ENCODE measurements at regions of chr14 and their contacts with region 1.

Region 1: DNA sequence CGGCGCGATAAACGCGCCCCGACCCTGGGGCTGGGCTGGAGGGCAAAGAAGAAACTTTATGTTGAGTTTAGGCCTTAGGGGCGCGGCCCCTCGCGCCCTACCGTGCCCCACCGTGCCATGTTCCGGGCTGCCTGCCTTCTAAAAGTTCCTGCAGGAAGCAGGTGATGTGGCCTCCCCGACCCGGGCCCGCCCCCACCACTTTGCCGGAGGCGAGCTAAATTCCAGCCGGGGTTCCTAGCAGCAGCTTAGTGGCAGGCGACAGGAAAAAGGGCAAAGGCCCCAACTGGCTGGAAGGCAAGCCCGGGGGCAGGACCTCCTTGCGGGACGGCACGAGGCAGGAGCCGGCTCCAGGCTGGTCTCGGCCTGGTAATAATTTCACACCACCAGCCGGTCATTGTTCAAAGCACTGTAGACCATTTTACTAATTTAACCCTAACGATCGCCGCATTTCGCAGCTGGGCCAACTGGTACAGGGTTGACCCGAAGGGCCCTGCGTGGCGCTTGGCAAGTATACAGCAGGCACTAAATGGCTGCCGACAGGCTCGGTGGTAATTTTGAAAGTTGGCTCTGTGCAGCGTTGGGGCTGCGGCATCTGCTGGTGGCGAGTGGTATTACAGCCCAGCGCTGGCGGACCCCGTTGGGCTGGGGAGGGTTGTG is 895 bp upstream of the CCDC88C start:
- DNase-seq: peak; percentile 75 to 86 (median 82)
- ATAC-seq: peak; percentile 63
- H3K4me3 ChIP-seq: peak overlapping the region; percentile 52
- H3K4me3 Mint-ChIP-seq: peak overlapping the region; percentile 61 to 91 (median 84)
- H3K27ac ChIP-seq: peak overlapping the region; percentile 97
- H3K27ac Mint-ChIP-seq: peak overlapping the region; percentile 80 to 98 (median 91)
- H3K4me1 ChIP-seq: peaks cover 19 to 25% of the 10 kb centered on the region in 2 donors
- H3K4me1 Mint-ChIP-seq: peaks cover 22 to 42% (median 34%) of the 10 kb centered on the region in 7 donors
- H3K27me3 ChIP-seq: no peaks in the 10 kb centered on the region
- H3K27me3 Mint-ChIP-seq: peaks cover 0 to 7% (median 0%) of the 10 kb centered on the region in 5 donors

Region 2: DNA sequence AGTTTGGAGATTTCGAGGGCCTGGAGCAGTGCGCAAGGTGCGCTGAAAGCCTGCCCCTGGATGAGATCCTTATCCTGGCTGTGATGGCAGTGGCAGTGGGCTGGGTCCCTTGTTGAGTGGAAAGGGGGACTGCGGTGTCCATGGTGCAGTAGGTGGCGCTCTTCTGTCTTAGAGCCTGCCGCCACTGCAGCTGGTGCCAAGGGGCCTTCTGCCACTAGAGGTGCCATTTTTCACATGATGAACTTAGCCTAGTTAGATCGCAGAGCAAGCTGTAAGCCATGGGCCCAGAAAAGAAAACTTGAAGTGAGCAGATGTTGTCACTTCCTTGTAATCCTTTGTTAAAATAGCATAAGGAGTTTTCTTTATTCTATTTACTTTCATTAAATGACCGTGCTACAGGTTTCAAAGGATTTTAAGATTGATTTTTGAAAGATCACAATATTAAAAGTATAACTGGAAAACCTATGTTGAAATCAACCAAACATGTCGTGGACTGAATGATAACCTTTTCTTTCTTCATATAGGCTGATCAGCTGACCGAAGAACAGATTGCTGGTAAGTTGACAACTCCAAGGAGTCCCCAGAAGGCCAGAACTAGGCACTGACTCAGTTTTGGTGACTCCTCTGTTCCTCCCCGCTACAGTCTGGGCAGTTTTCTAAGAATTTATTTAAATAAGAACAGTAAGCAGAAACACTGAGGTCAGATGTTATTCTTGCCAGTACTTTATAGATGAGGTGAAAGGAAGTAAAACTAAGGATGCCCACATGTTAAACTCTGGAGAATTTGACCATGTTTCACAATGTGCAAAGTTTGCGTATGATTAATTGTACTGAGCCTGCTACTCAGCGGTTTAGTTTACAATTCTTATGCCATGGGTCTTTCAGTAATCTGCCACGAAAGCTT is 1018.7 kb before region 1 on chr14:
- CTCF ChIA-PET with region 1: no interaction called
- POLR2A ChIA-PET with region 1: no interaction called
- intact Hi-C with region 1: loop called in 1 of 2 experiments (anchors 5 kb)
- DNase-seq: peak; percentile 60 to 89 (median 85)
- ATAC-seq: peak; percentile 69
- H3K4me3 ChIP-seq: peak overlapping the region; percentile 78
- H3K4me3 Mint-ChIP-seq: peak overlapping the region; percentile 91 to 100 (median 98)
- H3K27ac ChIP-seq: peak overlapping the region; percentile 92
- H3K27ac Mint-ChIP-seq: peak overlapping the region; percentile 38 to 100 (median 99)
- H3K4me1 ChIP-seq: peaks cover 49 to 50% of the 10 kb centered on the region in 2 donors
- H3K4me1 Mint-ChIP-seq: peaks cover 45 to 70% (median 62%) of the 10 kb centered on the region in 7 donors
- H3K27me3 ChIP-seq: no peaks in the 10 kb centered on the region
- H3K27me3 Mint-ChIP-seq: peaks cover 0 to 7% (median 0%) of the 10 kb centered on the region in 5 donors

Region 3: GRCh38 chr14:91009501-91010152 is 408.9 kb before region 1 on chr14:
- CTCF ChIA-PET with region 1: no interaction called
- POLR2A ChIA-PET with region 1: no interaction called
- intact Hi-C with region 1: no loop called
- DNase-seq: peak in 7 of 9 donors; percentile 17 to 60 (median 33)
- ATAC-seq: peak; percentile 86
- H3K4me3 ChIP-seq: no peak overlapping the region
- H3K4me3 Mint-ChIP-seq: peak overlapping the region in 9 of 10 donors; percentile 26 to 77 (median 62)
- H3K27ac ChIP-seq: no peak overlapping the region
- H3K27ac Mint-ChIP-seq: peak overlapping the region; percentile 29 to 81 (median 46)
- H3K4me1 ChIP-seq: peaks cover 0 to 28% of the 10 kb centered on the region in 2 donors
- H3K4me1 Mint-ChIP-seq: peaks cover 30 to 49% (median 44%) of the 10 kb centered on the region in 7 donors
- H3K27me3 ChIP-seq: no peaks in the 10 kb centered on the region
- H3K27me3 Mint-ChIP-seq: no peaks in the 10 kb centered on the region

Region 4: DNA sequence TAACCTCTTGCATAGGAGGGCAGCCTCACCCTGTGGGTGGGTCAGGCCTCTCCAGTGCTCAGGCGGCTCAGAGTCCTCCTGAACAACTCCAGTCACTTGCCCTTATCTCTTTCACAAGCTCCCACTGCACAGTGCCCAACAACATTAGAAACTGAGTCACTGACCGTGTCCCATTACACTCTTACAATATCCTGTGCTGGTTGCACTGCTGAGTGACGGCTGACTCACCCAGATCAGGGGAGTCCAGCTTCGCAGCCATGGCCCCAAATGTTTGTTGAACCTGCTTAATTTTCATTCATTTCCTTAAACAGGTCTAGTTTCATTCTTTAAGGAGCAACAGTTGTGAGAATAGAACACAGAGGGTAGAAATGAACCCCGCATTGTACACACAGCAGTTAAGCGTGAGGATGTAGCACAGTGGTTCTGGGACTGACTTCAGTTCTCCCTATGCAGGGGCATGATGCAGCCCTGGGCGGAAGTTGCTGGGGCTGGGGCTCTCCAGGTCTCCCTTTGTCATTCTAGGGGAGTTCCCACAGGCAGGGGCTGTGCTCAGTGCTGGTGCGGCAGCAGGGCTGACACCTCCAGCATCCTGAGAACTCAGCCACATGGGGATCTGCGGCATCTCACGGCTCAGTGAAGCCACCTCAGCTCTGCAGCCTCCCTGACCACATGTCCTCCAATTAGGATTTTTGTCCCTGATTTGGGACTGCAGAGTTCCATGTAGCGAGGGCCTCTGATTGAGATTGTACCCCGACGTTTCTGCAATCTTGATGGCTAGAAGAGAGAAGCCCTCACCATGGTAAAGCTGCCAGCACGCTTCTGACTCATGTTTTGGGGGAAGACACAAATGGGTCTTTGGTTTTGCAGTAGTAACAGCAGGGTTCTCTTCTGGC is 190.2 kb before region 1 on chr14:
- CTCF ChIA-PET with region 1: interaction called, 5 read pairs
- POLR2A ChIA-PET with region 1: no interaction called
- intact Hi-C with region 1: loop called in 1 of 2 experiments (anchors 2 kb)
- DNase-seq: peak; percentile 42 to 86 (median 60)
- ATAC-seq: peak; percentile 89
- H3K4me3 ChIP-seq: peak overlapping the region; percentile 34
- H3K4me3 Mint-ChIP-seq: peak overlapping the region; percentile 48 to 87 (median 73)
- H3K27ac ChIP-seq: peak overlapping the region; percentile 57
- H3K27ac Mint-ChIP-seq: peak overlapping the region; percentile 9 to 98 (median 88)
- H3K4me1 ChIP-seq: peaks cover 89 to 92% of the 10 kb centered on the region in 2 donors
- H3K4me1 Mint-ChIP-seq: peaks cover 69 to 99% (median 93%) of the 10 kb centered on the region in 7 donors
- H3K27me3 ChIP-seq: no peaks in the 10 kb centered on the region
- H3K27me3 Mint-ChIP-seq: no peaks in the 10 kb centered on the region

Region 5: GRCh38 chr14:91317381-91318308 is 100.9 kb before region 1 on chr14:
- CTCF ChIA-PET with region 1: interaction called, 101 read pairs
- POLR2A ChIA-PET with region 1: interaction called, 173 read pairs
- intact Hi-C with region 1: loop called in 1 of 2 experiments (anchors 1 kb)
- DNase-seq: peak; percentile 58 to 86 (median 84)
- ATAC-seq: peak; percentile 60
- H3K4me3 ChIP-seq: peak overlapping the region; percentile 39
- H3K4me3 Mint-ChIP-seq: peak overlapping the region; percentile 73 to 88 (median 81)
- H3K27ac ChIP-seq: peak overlapping the region; percentile 82
- H3K27ac Mint-ChIP-seq: peak overlapping the region; percentile 93 to 99 (median 98)
- H3K4me1 ChIP-seq: peaks cover 58 to 61% of the 10 kb centered on the region in 2 donors
- H3K4me1 Mint-ChIP-seq: peaks cover 55 to 88% (median 70%) of the 10 kb centered on the region in 7 donors
- H3K27me3 ChIP-seq: no peaks in the 10 kb centered on the region
- H3K27me3 Mint-ChIP-seq: no peaks in the 10 kb centered on the region

Region 6: GRCh38 chr14:91367173-91368171 is 51.0 kb before region 1 on chr14:
- CTCF ChIA-PET with region 1: interaction called, 4 read pairs
- POLR2A ChIA-PET with region 1: interaction called, 90 read pairs
- intact Hi-C with region 1: loop called in 1 of 2 experiments (anchors 2 kb)
- DNase-seq: peak in 8 of 9 donors; percentile 40 to 90 (median 60)
- ATAC-seq: peak; percentile 86
- H3K4me3 ChIP-seq: peak overlapping the region; percentile 23
- H3K4me3 Mint-ChIP-seq: peak overlapping the region; percentile 69 to 89 (median 82)
- H3K27ac ChIP-seq: peak overlapping the region; percentile 80
- H3K27ac Mint-ChIP-seq: peak overlapping the region; percentile 71 to 97 (median 93)
- H3K4me1 ChIP-seq: peaks cover 86 to 88% of the 10 kb centered on the region in 2 donors
- H3K4me1 Mint-ChIP-seq: peaks cover 65 to 97% (median 87%) of the 10 kb centered on the region in 7 donors
- H3K27me3 ChIP-seq: no peaks in the 10 kb centered on the region
- H3K27me3 Mint-ChIP-seq: no peaks in the 10 kb centered on the region

Region 7: DNA sequence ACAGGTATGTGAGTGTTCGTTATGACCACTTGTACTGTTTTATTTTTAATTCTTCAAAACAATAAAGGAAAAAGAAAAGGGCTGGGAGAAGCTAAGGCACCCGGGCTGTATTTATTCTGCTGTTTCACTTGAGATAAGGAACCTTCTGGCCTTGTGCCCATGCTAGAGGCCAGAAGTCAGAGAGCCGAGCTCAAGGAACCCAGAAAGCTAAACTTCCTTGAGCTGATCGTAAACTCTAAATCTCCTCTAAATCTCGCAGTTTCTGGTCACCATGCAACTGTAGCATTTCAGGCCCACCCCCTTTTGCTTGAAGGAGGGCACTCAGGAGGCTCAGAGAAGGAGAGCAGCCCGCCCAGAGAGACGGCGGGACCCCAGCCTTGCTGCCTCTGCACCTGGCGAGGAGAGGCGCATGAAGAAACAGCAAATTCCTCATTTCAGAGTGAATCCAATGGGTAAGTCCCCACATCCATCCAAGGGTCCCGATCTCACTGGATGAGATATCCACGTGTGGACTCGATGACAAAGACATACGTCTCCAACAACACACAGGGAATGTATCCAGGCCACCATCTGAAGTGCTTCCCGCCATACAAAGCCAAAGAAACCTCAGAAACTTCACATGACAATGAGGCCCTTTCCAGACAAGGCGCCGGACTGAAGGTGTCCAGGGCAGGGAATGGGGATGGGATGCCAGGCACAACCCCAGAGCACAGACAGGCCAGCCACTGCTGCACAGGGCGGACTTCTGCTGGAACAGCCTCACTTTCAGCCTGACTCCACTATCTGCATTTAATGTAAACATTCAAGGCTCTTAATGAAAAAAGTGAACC is 15.5 kb before region 1 on chr14:
- CTCF ChIA-PET with region 1: interaction called, 30 read pairs
- POLR2A ChIA-PET with region 1: interaction called, 328 read pairs
- intact Hi-C with region 1: loop called (anchors 1 kb)
- DNase-seq: no peak
- ATAC-seq: peak; percentile 2
- H3K4me3 ChIP-seq: peak overlapping the region; percentile 21
- H3K4me3 Mint-ChIP-seq: peak overlapping the region; percentile 64 to 92 (median 84)
- H3K27ac ChIP-seq: peak overlapping the region; percentile 95
- H3K27ac Mint-ChIP-seq: peak overlapping the region; percentile 71 to 99 (median 95)
- H3K4me1 ChIP-seq: peaks cover 86 to 90% of the 10 kb centered on the region in 2 donors
- H3K4me1 Mint-ChIP-seq: peaks cover 85 to 97% (median 90%) of the 10 kb centered on the region in 7 donors
- H3K27me3 ChIP-seq: no peaks in the 10 kb centered on the region
- H3K27me3 Mint-ChIP-seq: no peaks in the 10 kb centered on the region

Region 8: GRCh38 chr14:91685600-91685999 is 267.1 kb after region 1 on chr14:
- CTCF ChIA-PET with region 1: no interaction called
- POLR2A ChIA-PET with region 1: no interaction called
- intact Hi-C with region 1: no loop called
- DNase-seq: no peak
- ATAC-seq: no peak
- H3K4me3 ChIP-seq: no peak overlapping the region
- H3K4me3 Mint-ChIP-seq: no peak overlapping the region
- H3K27ac ChIP-seq: no peak overlapping the region
- H3K27ac Mint-ChIP-seq: no peak overlapping the region
- H3K4me1 ChIP-seq: no peaks in the 10 kb centered on the region
- H3K4me1 Mint-ChIP-seq: peaks cover 0 to 25% (median 0%) of the 10 kb centered on the region in 7 donors
- H3K27me3 ChIP-seq: no peaks in the 10 kb centered on the region
- H3K27me3 Mint-ChIP-seq: no peaks in the 10 kb centered on the region

Region 9: DNA sequence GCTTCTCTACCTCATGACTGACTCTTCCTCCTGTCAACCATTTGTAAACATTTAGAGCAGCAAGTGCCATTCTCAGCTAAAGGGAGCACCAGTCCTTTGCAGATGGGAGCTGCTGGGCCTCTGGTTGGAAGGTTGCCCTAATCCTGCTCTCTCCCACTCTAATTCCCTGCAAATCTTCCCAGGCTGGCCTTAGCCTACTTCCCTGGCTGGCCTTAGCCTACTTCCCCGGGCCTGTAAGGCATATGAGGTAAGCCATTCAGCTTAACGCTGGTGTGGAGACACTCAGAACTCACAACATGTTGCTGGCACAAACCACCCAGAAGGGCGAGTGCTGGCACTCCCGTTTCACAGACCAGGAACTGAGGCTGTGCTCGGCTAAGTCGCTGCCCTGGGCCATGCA is 772.3 kb after region 1 on chr14:
- CTCF ChIA-PET with region 1: no interaction called
- POLR2A ChIA-PET with region 1: no interaction called
- intact Hi-C with region 1: no loop called
- DNase-seq: no peak
- ATAC-seq: no peak
- H3K4me3 ChIP-seq: no peak overlapping the region
- H3K4me3 Mint-ChIP-seq: no peak overlapping the region
- H3K27ac ChIP-seq: no peak overlapping the region
- H3K27ac Mint-ChIP-seq: no peak overlapping the region
- H3K4me1 ChIP-seq: no peaks in the 10 kb centered on the region
- H3K4me1 Mint-ChIP-seq: no peaks in the 10 kb centered on the region
- H3K27me3 ChIP-seq: no peaks in the 10 kb centered on the region
- H3K27me3 Mint-ChIP-seq: no peaks in the 10 kb centered on the region